ENCODE measurements at regions of chr13 and their contacts with region 1.

Region 1: GRCh38 chr13:64154514-64154913 is 2738.9 kb upstream of the PCDH20 start:
- DNase-seq: peak; percentile 69
- H3K4me3 ChIP-seq: no peak overlapping the region
- H3K27ac ChIP-seq: no peak overlapping the region
- H3K4me1 ChIP-seq: peaks cover 12% of the 10 kb centered on the region
- H3K27me3 ChIP-seq: no peaks in the 10 kb centered on the region
- CTCF ChIP-seq: peak; percentile 11 to 30
- POLR2A ChIP-seq: no peak

Region 2: GRCh38 chr13:63124863-63125262 is 1029.7 kb before region 1 on chr13:
- CTCF ChIA-PET with region 1: no interaction called
- POLR2A ChIA-PET with region 1: no interaction called
- dilution Hi-C with region 1: no loop called
- intact Hi-C with region 1: loop called (anchors 5 kb)
- DNase-seq: peak; percentile 29
- H3K4me3 ChIP-seq: no peak overlapping the region
- H3K27ac ChIP-seq: no peak overlapping the region
- H3K4me1 ChIP-seq: no peaks in the 10 kb centered on the region
- H3K27me3 ChIP-seq: no peaks in the 10 kb centered on the region
- CTCF ChIP-seq: no peak
- POLR2A ChIP-seq: no peak

Region 3: DNA sequence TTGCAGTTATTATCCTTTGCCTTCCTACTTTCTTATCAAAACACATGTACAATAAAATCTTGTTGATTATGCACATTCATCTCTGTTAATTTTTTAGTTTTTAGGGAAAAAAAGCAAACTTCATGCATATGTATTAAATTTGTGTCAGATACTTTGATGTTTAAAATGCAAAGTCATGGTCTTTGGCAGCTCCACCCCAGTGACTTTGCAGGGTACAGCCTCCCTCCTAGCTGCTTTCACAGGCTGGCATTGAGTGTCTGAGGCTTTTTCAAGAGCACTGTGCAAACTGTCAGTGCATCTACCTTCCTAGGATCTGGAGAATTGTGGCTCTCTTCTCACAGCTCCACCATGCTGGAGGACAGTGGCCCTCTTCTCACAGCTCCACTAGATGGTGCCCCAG is 750.8 kb before region 1 on chr13:
- CTCF ChIA-PET with region 1: no interaction called
- POLR2A ChIA-PET with region 1: no interaction called
- dilution Hi-C with region 1: no loop called
- intact Hi-C with region 1: no loop called
- DNase-seq: no peak
- H3K4me3 ChIP-seq: no peak overlapping the region
- H3K27ac ChIP-seq: no peak overlapping the region
- H3K4me1 ChIP-seq: no peaks in the 10 kb centered on the region
- H3K27me3 ChIP-seq: no peaks in the 10 kb centered on the region
- CTCF ChIP-seq: no peak
- POLR2A ChIP-seq: no peak

Region 4: GRCh38 chr13:63853816-63854215 is 300.7 kb before region 1 on chr13:
- CTCF ChIA-PET with region 1: no interaction called
- POLR2A ChIA-PET with region 1: no interaction called
- dilution Hi-C with region 1: no loop called
- intact Hi-C with region 1: no loop called
- DNase-seq: no peak
- H3K4me3 ChIP-seq: no peak overlapping the region
- H3K27ac ChIP-seq: no peak overlapping the region
- H3K4me1 ChIP-seq: no peaks in the 10 kb centered on the region
- H3K27me3 ChIP-seq: no peaks in the 10 kb centered on the region
- CTCF ChIP-seq: no peak
- POLR2A ChIP-seq: no peak

Region 5: GRCh38 chr13:64099994-64100393 is 54.5 kb before region 1 on chr13:
- CTCF ChIA-PET with region 1: no interaction called
- POLR2A ChIA-PET with region 1: no interaction called
- dilution Hi-C with region 1: no loop called
- intact Hi-C with region 1: no loop called
- DNase-seq: no peak
- H3K4me3 ChIP-seq: no peak overlapping the region
- H3K27ac ChIP-seq: no peak overlapping the region
- H3K4me1 ChIP-seq: no peaks in the 10 kb centered on the region
- H3K27me3 ChIP-seq: no peaks in the 10 kb centered on the region
- CTCF ChIP-seq: no peak
- POLR2A ChIP-seq: no peak

Region 6: DNA sequence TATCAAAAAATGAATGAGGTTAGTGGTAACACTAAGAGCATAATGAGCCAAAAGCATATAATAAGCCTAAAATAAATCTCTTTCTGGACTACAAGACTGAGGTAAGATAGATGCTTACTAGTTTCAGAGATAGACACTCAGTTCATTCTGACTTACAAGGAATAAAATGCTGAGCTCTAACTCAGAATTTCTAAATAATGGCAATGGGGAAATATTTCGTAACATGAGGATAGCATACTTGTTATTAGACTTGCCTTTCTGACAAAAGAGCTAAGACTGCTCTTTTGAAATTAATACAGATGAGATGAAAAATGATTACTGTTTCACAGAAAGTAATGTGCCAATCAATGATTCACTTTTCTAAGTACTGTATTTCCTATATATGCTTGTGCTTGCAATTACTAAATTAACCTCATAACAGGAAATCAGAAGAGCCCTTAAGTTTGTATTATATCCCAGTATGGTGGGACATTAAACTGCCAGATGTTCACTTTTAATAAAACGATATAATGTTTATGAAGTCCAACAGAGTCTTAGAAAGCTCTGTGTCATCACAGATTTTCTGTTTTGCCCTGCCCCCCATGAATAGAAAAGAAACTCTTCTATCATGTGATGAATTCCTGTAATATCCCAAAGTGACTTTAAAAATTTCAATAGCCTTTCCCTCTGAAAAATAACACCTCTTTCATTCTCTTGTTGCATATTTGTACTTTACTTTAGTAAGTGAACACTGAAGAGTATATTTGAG is 32.2 kb after region 1 on chr13:
- CTCF ChIA-PET with region 1: no interaction called
- POLR2A ChIA-PET with region 1: no interaction called
- dilution Hi-C with region 1: no loop called
- intact Hi-C with region 1: no loop called
- DNase-seq: no peak
- H3K4me3 ChIP-seq: no peak overlapping the region
- H3K27ac ChIP-seq: no peak overlapping the region
- H3K4me1 ChIP-seq: no peaks in the 10 kb centered on the region
- H3K27me3 ChIP-seq: no peaks in the 10 kb centered on the region
- CTCF ChIP-seq: no peak
- POLR2A ChIP-seq: no peak

Region 7: GRCh38 chr13:64234255-64234654 is 79.7 kb after region 1 on chr13:
- CTCF ChIA-PET with region 1: no interaction called
- POLR2A ChIA-PET with region 1: no interaction called
- dilution Hi-C with region 1: no loop called
- intact Hi-C with region 1: loop called (anchors 2 kb)
- DNase-seq: peak; percentile 93
- H3K4me3 ChIP-seq: no peak overlapping the region
- H3K27ac ChIP-seq: peak overlapping the region; percentile 61
- H3K4me1 ChIP-seq: peaks cover 14% of the 10 kb centered on the region
- H3K27me3 ChIP-seq: no peaks in the 10 kb centered on the region
- CTCF ChIP-seq: no peak
- POLR2A ChIP-seq: no peak

Region 8: GRCh38 chr13:64453831-64454230 is 299.3 kb after region 1 on chr13:
- CTCF ChIA-PET with region 1: no interaction called
- POLR2A ChIA-PET with region 1: no interaction called
- dilution Hi-C with region 1: no loop called
- intact Hi-C with region 1: loop called (anchors 10 kb)
- DNase-seq: peak; percentile 7
- H3K4me3 ChIP-seq: no peak overlapping the region
- H3K27ac ChIP-seq: no peak overlapping the region
- H3K4me1 ChIP-seq: no peaks in the 10 kb centered on the region
- H3K27me3 ChIP-seq: no peaks in the 10 kb centered on the region
- CTCF ChIP-seq: no peak
- POLR2A ChIP-seq: no peak

Region 9: DNA sequence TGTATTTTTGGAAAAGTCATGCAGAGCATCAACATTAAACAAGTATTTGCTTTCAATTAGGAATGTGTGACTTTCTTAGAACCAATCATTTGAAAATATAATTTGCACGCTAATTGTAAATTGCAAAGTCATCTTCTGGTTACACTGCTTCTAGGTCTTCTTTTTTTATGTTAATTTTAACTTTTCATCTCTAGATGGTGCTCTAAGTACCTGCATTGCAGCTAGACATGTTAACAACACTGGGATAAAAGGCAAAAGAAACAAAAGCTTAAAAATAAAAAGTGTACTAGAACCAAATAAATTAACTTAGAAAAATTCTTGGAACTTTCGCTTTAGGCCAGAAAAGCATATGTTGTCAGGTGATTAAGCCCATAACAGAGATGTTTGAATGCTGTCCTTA is 317.4 kb after region 1 on chr13:
- CTCF ChIA-PET with region 1: interaction called, 7 read pairs
- POLR2A ChIA-PET with region 1: no interaction called
- dilution Hi-C with region 1: no loop called
- intact Hi-C with region 1: loop called (anchors 2 kb)
- DNase-seq: peak; percentile 66
- H3K4me3 ChIP-seq: no peak overlapping the region
- H3K27ac ChIP-seq: no peak overlapping the region
- H3K4me1 ChIP-seq: no peaks in the 10 kb centered on the region
- H3K27me3 ChIP-seq: no peaks in the 10 kb centered on the region
- CTCF ChIP-seq: peak in 1 of 2 donors; percentile 22
- POLR2A ChIP-seq: no peak

Region 10: DNA sequence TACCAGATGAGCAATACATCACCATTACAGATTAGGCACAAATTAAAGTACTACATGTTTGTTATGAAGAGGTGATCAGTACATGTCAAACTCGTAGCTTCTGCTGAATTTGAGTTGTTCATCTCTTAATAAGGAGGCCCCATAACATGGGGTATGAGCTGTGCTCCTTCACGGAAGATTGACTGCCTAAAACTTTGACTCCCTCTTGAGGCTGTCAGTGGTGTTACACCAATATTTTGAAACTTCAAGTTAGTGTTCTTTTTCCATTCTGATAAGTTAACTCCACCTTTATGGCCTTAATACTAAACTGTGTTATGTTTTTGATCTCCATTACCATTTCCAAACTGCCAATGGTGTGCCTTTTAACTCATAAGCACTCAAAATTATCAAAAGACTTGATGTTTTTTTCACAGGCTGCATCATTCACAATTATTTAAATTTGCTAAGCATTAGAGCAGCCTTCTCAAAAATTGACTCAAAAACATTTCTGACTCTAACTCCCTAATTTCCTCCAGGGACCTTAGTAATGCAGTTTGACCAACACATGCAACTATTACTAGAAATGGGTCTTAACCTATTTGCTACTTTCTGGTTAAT is 1484.2 kb after region 1 on chr13:
- CTCF ChIA-PET with region 1: interaction called, 15 read pairs
- POLR2A ChIA-PET with region 1: no interaction called
- dilution Hi-C with region 1: no loop called
- intact Hi-C with region 1: loop called (anchors 1 kb)
- DNase-seq: peak; percentile 51
- H3K4me3 ChIP-seq: no peak overlapping the region
- H3K27ac ChIP-seq: no peak overlapping the region
- H3K4me1 ChIP-seq: no peaks in the 10 kb centered on the region
- H3K27me3 ChIP-seq: no peaks in the 10 kb centered on the region
- CTCF ChIP-seq: peak; percentile 54 to 66
- POLR2A ChIP-seq: no peak